ENCODE measurements at regions of chr5 and their contacts with region 1.

Region 1: GRCh38 chr5:75156585-75156984 is 80.1 kb downstream of the ANKRD31 start:
- DNase-seq: peak; percentile 66 to 75
- H3K4me3 ChIP-seq: no peak overlapping the region
- H3K4me3 Mint-ChIP-seq: no peak overlapping the region
- H3K27ac Mint-ChIP-seq: no peak overlapping the region
- H3K4me1 ChIP-seq: peaks cover 10% of the 10 kb centered on the region
- H3K4me1 Mint-ChIP-seq: peaks cover 21% of the 10 kb centered on the region
- H3K27me3 ChIP-seq: no peaks in the 10 kb centered on the region
- H3K27me3 Mint-ChIP-seq: no peaks in the 10 kb centered on the region
- CTCF ChIP-seq: peak; percentile 50 to 58

Region 2: DNA sequence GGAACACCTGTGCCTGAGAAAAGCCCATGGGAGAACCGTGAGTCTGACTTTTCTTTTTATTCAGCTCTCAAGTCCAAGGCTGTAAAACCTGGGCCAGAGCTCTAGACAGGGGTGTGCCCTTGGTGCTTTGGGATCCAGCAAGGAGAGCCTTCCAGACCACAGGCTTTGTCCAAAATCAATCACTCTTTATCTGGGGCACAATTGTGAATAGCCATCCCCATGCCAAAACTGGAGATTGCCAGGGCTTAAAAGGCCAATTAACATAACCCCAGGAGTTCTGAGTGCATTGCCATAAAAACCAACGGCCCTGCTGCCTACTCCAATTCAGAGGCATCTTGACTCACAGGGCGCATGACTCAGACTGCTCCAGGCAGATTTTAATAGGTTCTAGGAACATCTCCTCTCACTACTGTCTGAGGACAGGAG is 1138.8 kb before region 1 on chr5:
- CTCF ChIA-PET with region 1: no interaction called
- POLR2A ChIA-PET with region 1: no interaction called
- intact Hi-C with region 1: no loop called
- DNase-seq: no peak
- H3K4me3 ChIP-seq: no peak overlapping the region
- H3K4me3 Mint-ChIP-seq: no peak overlapping the region
- H3K27ac Mint-ChIP-seq: no peak overlapping the region
- H3K4me1 ChIP-seq: no peaks in the 10 kb centered on the region
- H3K4me1 Mint-ChIP-seq: peaks cover 5% of the 10 kb centered on the region
- H3K27me3 ChIP-seq: no peaks in the 10 kb centered on the region
- H3K27me3 Mint-ChIP-seq: peaks cover 5% of the 10 kb centered on the region
- CTCF ChIP-seq: no peak

Region 3: DNA sequence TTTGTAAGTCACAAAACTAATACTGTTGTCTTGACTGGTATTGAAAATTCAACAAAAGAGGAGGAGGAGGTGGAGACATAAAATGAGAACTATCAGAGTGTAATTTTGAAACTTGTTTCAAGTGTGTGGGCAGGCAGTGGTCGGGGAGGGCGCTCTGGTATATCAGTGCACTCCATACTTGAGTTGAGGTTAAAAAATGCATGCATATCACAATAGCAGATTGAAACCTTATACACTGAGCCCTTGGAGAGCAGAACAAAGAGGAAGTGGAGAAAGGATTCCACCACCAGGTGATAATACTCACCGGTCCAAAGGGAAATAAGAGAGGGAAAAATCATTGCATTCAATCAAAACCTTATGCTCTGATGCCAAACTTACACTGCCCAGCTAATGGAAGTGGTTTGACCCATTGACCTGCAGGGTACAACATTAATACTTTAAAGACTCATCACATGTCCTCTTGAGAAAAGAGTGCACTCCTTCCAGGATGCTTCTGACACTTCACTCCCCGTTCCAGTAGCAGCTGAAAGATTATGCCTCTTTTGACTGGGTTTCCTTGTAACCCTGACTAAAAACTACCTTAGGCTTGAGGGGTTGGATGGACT is 210.9 kb before region 1 on chr5:
- CTCF ChIA-PET with region 1: no interaction called
- POLR2A ChIA-PET with region 1: no interaction called
- intact Hi-C with region 1: loop called (anchors 10 kb)
- DNase-seq: no peak
- H3K4me3 ChIP-seq: no peak overlapping the region
- H3K4me3 Mint-ChIP-seq: no peak overlapping the region
- H3K27ac Mint-ChIP-seq: no peak overlapping the region
- H3K4me1 ChIP-seq: peaks cover 74% of the 10 kb centered on the region
- H3K4me1 Mint-ChIP-seq: peaks cover 58% of the 10 kb centered on the region
- H3K27me3 ChIP-seq: no peaks in the 10 kb centered on the region
- H3K27me3 Mint-ChIP-seq: no peaks in the 10 kb centered on the region
- CTCF ChIP-seq: no peak

Region 4: GRCh38 chr5:75236322-75237316 is 80.0 kb after region 1 on chr5 and contains the start of gene ANKRD31:
- CTCF ChIA-PET with region 1: interaction called, 10 read pairs
- POLR2A ChIA-PET with region 1: interaction called, 3 read pairs
- intact Hi-C with region 1: loop called (anchors 2 kb)
- DNase-seq: peak; percentile 72 to 90
- H3K4me3 ChIP-seq: peak within 1 kb of the TSS; percentile 91
- H3K4me3 Mint-ChIP-seq: peak within 1 kb of the TSS; percentile 80
- H3K27ac Mint-ChIP-seq: peak within 1 kb of the TSS; percentile 82
- H3K4me1 ChIP-seq: peaks cover 24% of the 10 kb centered on the region
- H3K4me1 Mint-ChIP-seq: peaks cover 8% of the 10 kb centered on the region
- H3K27me3 ChIP-seq: no peaks in the 10 kb centered on the region
- H3K27me3 Mint-ChIP-seq: no peaks in the 10 kb centered on the region
- CTCF ChIP-seq: peak; percentile 38 to 86
- total RNA-seq, gene ANKRD31: 0.66 and 0.79 TPM in 2 replicates

Region 5: DNA sequence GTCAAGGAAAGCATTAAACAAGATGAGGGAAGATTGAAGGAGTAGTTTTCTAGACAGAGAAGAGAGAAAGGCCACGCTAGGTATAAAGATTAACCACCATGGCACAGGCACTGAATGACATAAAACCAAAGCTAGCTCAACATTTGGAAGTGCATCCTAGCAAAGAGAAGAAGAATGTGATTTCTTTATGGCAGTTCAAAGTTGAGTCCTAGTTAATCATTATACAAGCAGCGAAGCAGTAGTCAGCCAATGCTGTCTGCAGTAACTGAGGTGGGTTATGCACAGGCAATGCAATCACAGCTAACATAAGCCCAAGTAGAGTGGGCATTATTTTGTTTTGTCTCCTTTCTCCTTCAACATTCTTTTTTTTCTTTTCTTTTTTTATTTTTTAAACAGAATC is 104.1 kb after region 1 on chr5:
- CTCF ChIA-PET with region 1: no interaction called
- POLR2A ChIA-PET with region 1: no interaction called
- intact Hi-C with region 1: loop called (anchors 1 kb)
- DNase-seq: peak; percentile 58 to 65
- H3K4me3 ChIP-seq: no peak overlapping the region
- H3K4me3 Mint-ChIP-seq: peak overlapping the region; percentile 6
- H3K27ac Mint-ChIP-seq: no peak overlapping the region
- H3K4me1 ChIP-seq: peaks cover 26% of the 10 kb centered on the region
- H3K4me1 Mint-ChIP-seq: peaks cover 17% of the 10 kb centered on the region
- H3K27me3 ChIP-seq: no peaks in the 10 kb centered on the region
- H3K27me3 Mint-ChIP-seq: no peaks in the 10 kb centered on the region
- CTCF ChIP-seq: no peak

Measured in Caco-2 (cell line).